ENCODE measurements at regions of chr15 and their contacts with region 1.

Region 1: GRCh38 chr15:68730471-68730919 is 90.2 kb downstream of the ANP32A start:
- DNase-seq: peak; percentile 63
- ATAC-seq: peak; percentile 55

Region 2: GRCh38 chr15:68543165-68544008 is 187.1 kb before region 1 on chr15:
- intact Hi-C with region 1: loop called (anchors 5 kb)
- DNase-seq: no peak
- ATAC-seq: peak; percentile 93

Region 3: GRCh38 chr15:68875377-68876116 is 145.1 kb after region 1 on chr15:
- intact Hi-C with region 1: loop called (anchors 2 kb)
- DNase-seq: peak; percentile 96
- ATAC-seq: peak; percentile 96

Region 4: GRCh38 chr15:69045808-69046207 is 315.3 kb after region 1 on chr15:
- intact Hi-C with region 1: no loop called
- DNase-seq: no peak
- ATAC-seq: peak; percentile 46

Measured in sciatic nerve (tissue), 2 donors.